CD8-positive, alpha-beta T cell (primary cell): ENCODE measurements at regions of chr19 and their contacts with region 1.

Region 1: DNA sequence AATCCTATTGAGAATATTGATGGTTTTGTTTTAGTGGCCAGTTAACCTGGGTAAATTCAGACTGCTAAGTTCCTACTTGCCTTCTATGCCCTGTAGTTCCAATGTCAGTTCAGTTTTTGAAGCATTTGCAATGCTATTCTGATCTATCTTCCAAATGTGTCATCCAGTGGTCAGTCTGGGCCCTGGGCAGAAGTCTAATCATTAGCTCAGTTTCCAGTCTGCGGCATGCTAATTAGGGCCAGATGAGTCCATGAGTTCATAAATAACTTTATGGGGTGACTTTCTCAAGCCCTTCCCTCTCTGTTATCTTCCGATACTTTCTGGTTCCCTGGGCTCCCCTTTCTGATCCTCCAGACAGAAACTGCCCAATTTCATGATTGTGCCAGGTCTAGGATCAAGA is 32.7 kb downstream of the FAM187B start:
- DNase-seq: no peak
- ATAC-seq: no peak
- H3K4me3 ChIP-seq: no peak overlapping the region
- H3K4me3 Mint-ChIP-seq: no peak overlapping the region
- H3K27ac ChIP-seq: no peak overlapping the region
- H3K27ac Mint-ChIP-seq: no peak overlapping the region
- H3K4me1 ChIP-seq: peaks cover 4% of the 10 kb centered on the region
- H3K4me1 Mint-ChIP-seq: peaks cover 23% of the 10 kb centered on the region
- H3K27me3 ChIP-seq: no peaks in the 10 kb centered on the region
- H3K27me3 Mint-ChIP-seq: no peaks in the 10 kb centered on the region
- CTCF ChIP-seq: no peak

Region 2: DNA sequence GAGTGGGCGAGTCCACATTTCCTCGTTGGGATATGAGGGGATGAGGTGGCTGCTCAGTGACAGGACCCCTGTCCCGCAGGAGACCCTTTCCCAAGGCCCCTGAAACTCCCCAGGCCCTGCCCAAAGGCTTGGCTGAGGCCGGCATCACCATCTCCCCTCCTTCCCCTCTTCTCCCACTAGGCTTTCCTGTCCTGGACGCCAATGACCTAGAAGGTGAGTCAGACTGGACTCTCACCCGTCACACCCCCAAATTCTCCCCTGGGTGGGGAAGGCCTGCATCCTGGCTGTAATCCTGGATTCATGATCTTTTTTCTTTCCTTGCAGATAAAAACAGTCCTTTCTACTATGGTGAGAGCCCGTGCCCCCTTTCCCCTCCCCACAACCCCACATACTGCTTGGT is 74.9 kb before region 1 on chr19:
- CTCF ChIA-PET with region 1: no interaction called
- POLR2A ChIA-PET with region 1: no interaction called
- intact Hi-C with region 1: no loop called
- DNase-seq: no peak
- ATAC-seq: no peak
- H3K4me3 ChIP-seq: no peak overlapping the region
- H3K4me3 Mint-ChIP-seq: no peak overlapping the region
- H3K27ac ChIP-seq: no peak overlapping the region
- H3K27ac Mint-ChIP-seq: no peak overlapping the region
- H3K4me1 ChIP-seq: peaks cover 13% of the 10 kb centered on the region
- H3K4me1 Mint-ChIP-seq: peaks cover 13% of the 10 kb centered on the region
- H3K27me3 ChIP-seq: no peaks in the 10 kb centered on the region
- H3K27me3 Mint-ChIP-seq: no peaks in the 10 kb centered on the region
- CTCF ChIP-seq: no peak

Region 3: GRCh38 chr19:35269421-35270117 is 73.7 kb after region 1 on chr19:
- CTCF ChIA-PET with region 1: interaction called, 4 read pairs
- POLR2A ChIA-PET with region 1: interaction called, 3 read pairs
- intact Hi-C with region 1: loop called in 1 of 2 experiments (anchors 5 kb)
- DNase-seq: peak; percentile 57 to 88 (median 78)
- ATAC-seq: peak; percentile 47
- H3K4me3 ChIP-seq: peak overlapping the region in 1 of 2 experiments; percentile 62
- H3K4me3 Mint-ChIP-seq: peak overlapping the region; percentile 75
- H3K27ac ChIP-seq: no peak overlapping the region
- H3K27ac Mint-ChIP-seq: peak overlapping the region; percentile 80
- H3K4me1 ChIP-seq: peaks cover 25% of the 10 kb centered on the region
- H3K4me1 Mint-ChIP-seq: peaks cover 45% of the 10 kb centered on the region
- H3K27me3 ChIP-seq: no peaks in the 10 kb centered on the region
- H3K27me3 Mint-ChIP-seq: no peaks in the 10 kb centered on the region
- CTCF ChIP-seq: peak; percentile 64